ENCODE measurements at regions of chr2 and their contacts with region 1.

Region 1: DNA sequence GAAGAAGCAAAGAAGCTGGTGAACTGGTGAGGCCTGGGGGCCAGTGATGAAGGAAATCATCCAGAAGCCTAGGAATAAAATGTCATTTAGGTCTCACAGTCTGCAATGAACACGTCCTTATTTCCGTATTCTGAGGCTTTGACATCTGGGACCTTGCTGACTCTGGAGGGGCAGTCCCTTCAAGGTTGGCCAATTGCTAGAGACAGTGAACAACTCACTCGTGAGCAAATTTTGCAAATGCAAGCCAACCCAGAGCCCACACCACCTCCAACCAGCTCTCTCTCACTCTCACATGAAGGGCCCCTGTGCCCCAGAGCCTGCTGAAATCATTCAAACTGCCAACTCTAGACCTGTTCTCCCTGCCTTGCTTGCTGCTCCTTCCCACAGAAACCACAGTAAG is 279.1 kb upstream of the LYPD1 start:
- DNase-seq: no peak
- ATAC-seq: no peak
- H3K4me3 ChIP-seq: no peak overlapping the region
- H3K4me3 Mint-ChIP-seq: no peak overlapping the region
- H3K27ac ChIP-seq: no peak overlapping the region
- H3K27ac Mint-ChIP-seq: no peak overlapping the region
- H3K4me1 ChIP-seq: no peaks in the 10 kb centered on the region
- H3K4me1 Mint-ChIP-seq: no peaks in the 10 kb centered on the region
- H3K27me3 ChIP-seq: no peaks in the 10 kb centered on the region
- H3K27me3 Mint-ChIP-seq: no peaks in the 10 kb centered on the region

Region 2: GRCh38 chr2:132936791-132937190 is 12.3 kb before region 1 on chr2:
- CTCF ChIA-PET with region 1: no interaction called
- POLR2A ChIA-PET with region 1: no interaction called
- DNase-seq: no peak
- ATAC-seq: no peak
- H3K4me3 ChIP-seq: no peak overlapping the region
- H3K4me3 Mint-ChIP-seq: no peak overlapping the region
- H3K27ac ChIP-seq: no peak overlapping the region
- H3K27ac Mint-ChIP-seq: no peak overlapping the region
- H3K4me1 ChIP-seq: no peaks in the 10 kb centered on the region
- H3K4me1 Mint-ChIP-seq: no peaks in the 10 kb centered on the region
- H3K27me3 ChIP-seq: no peaks in the 10 kb centered on the region
- H3K27me3 Mint-ChIP-seq: no peaks in the 10 kb centered on the region

Region 3: DNA sequence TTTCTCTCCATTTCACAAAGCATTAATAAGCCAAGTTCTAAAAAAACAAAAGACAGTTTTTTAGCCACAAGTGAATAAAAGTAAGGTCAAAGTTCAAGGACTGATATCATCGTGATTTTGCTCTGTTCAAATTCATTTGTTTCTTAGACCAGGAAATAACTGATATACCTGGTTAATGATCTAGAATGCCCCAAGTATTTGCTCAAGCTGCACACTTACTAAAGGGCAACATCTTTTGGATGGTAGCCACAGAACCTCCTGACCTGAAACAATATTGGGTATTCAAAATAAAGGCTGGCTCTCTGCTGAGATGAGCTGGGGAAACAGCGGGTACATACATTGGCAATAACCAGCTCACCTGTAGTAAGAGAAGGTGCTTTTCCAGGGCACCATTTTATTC is 35.6 kb after region 1 on chr2:
- CTCF ChIA-PET with region 1: interaction called in 1 of 2 experiments, 11 read pairs
- POLR2A ChIA-PET with region 1: no interaction called
- DNase-seq: no peak
- ATAC-seq: no peak
- H3K4me3 ChIP-seq: no peak overlapping the region
- H3K4me3 Mint-ChIP-seq: no peak overlapping the region
- H3K27ac ChIP-seq: no peak overlapping the region
- H3K27ac Mint-ChIP-seq: no peak overlapping the region
- H3K4me1 ChIP-seq: no peaks in the 10 kb centered on the region
- H3K4me1 Mint-ChIP-seq: no peaks in the 10 kb centered on the region
- H3K27me3 ChIP-seq: no peaks in the 10 kb centered on the region
- H3K27me3 Mint-ChIP-seq: no peaks in the 10 kb centered on the region

Region 4: GRCh38 chr2:132999421-132999820 is 50.3 kb after region 1 on chr2:
- CTCF ChIA-PET with region 1: no interaction called
- POLR2A ChIA-PET with region 1: no interaction called
- DNase-seq: no peak
- ATAC-seq: no peak
- H3K4me3 ChIP-seq: no peak overlapping the region
- H3K4me3 Mint-ChIP-seq: no peak overlapping the region
- H3K27ac ChIP-seq: no peak overlapping the region
- H3K27ac Mint-ChIP-seq: no peak overlapping the region
- H3K4me1 ChIP-seq: no peaks in the 10 kb centered on the region
- H3K4me1 Mint-ChIP-seq: no peaks in the 10 kb centered on the region
- H3K27me3 ChIP-seq: no peaks in the 10 kb centered on the region
- H3K27me3 Mint-ChIP-seq: no peaks in the 10 kb centered on the region

Measured in T-cell (primary cell).